K562 (cell line): ENCODE measurements at regions of chr18 and their contacts with region 1.

Region 1: DNA sequence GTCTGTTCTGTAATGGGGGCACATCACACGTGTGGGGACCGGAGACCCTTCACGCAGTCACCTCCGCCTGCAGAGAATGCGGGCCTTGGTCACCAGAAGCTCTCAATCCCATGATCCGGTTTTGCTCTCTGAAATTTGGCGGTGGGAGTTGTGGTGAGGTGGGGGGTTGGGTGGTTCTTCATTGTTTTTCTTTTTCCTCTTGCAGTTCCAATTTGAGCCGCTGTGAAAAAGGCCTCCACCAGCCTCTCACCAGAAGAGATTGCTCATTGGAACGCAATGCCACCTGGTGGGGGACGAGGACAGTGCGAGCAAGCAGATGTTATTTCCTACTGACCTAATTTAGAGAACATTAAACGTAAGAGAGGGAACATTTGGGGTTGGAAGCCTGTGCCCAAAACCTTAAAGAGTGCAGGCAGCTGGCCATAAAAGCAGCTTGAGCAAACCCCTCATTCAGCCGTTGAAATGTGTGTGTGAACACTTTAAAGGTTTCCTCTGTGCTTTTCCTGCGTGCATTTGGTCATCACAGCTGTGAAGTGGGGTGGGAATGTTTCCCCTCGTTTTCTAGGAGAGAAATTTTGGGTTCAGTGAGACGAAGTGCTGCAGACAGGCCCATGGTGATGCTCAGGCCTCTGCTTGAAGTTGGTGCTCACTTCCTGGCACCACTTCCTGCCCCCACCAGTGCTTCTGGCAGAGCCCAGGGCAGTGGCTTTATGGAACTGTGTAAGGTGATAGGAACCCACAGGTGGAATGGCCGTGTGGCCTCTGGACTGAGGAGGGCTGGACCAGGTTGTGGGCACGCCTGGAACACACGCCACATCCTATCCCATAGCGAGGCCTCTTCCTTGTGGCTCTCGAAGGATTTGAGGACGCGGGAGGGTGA is 61.7 kb downstream of the ZCCHC2 start:
- DNase-seq: peak; percentile 77 to 86 (median 79)
- ATAC-seq: peak; percentile 92
- H3K4me3 ChIP-seq: no peak overlapping the region
- H3K27ac ChIP-seq: no peak overlapping the region
- H3K4me1 ChIP-seq: peaks cover 2 to 3% of the 10 kb centered on the region in 2 experiments; a peak in 1 of 5 replicates
- H3K27me3 ChIP-seq: no peaks in the 10 kb centered on the region
- CTCF ChIP-seq: peak; percentile 91 to 99 (median 99)
- EP300 ChIP-seq: no peak
- POLR2A ChIP-seq: no peak
- RAD21 ChIP-seq: peak; percentile 83 to 91

Region 2: DNA sequence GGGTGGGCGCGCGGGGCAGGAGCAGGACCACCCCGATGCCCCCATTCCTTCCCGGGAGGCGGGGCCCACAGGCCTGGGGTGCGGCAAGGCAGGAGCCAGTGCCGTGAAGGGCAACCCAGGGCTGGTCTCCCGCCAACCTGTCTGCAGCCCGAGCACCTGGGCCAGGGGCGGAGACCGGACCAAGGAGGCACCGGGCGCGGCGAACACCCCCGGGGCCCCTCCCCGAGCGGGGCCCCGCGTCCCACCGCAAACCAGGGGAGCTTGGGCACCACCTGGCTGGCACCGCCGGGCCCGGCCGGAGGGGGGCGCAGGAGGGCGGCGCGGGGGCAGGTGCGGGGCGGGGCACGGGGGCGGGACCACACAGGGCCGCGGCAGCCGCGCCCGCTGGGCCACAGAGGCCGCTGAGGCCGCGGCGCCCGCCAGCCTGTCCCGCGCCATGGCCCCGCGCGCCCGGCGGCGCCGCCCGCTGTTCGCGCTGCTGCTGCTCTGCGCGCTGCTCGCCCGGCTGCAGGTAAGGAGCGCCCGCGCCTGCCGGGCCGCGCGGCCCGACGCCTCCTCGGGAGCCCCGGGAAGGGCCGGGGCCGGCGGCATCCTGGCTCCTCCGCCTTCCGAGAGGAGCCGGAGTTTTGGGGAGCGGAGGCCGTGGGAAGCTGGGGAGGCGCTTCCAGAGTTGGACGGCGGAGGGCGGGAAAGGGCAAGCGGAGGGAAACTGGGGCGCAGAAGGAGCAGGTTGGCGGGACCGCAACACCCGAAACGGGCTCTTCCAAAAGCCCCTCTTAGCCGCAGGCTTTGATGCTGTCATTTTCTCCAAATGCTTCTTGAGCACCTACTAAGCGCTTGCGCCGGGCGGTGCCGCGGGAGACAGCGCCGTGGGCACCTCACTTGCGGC is 259.3 kb before region 1 on chr18 and contains the start of gene TNFRSF11A:
- CTCF ChIA-PET with region 1: interaction called, 5 read pairs
- POLR2A ChIA-PET with region 1: no interaction called
- in situ Hi-C with region 1: no loop called
- intact Hi-C with region 1: loop called (anchors 1 kb)
- DNase-seq: peak; percentile 46 to 83 (median 80)
- ATAC-seq: peak; percentile 95
- H3K4me3 ChIP-seq: peak within 1 kb of the TSS; percentile 37
- H3K27ac ChIP-seq: no peak within 1 kb of the TSS
- H3K4me1 ChIP-seq: peaks cover 4 to 20% of the 10 kb centered on the region in 2 experiments; a peak in 3 of 5 replicates
- H3K27me3 ChIP-seq: peaks cover 20 to 30% of the 10 kb centered on the region in 2 experiments
- CTCF ChIP-seq: peak in 2 of 3 experiments; percentile 25 to 48; a peak in 2 of 6 replicates
- EP300 ChIP-seq: no peak
- POLR2A ChIP-seq: no peak
- RAD21 ChIP-seq: no peak
- polyA plus RNA-seq, gene TNFRSF11A: not detected

Region 3: DNA sequence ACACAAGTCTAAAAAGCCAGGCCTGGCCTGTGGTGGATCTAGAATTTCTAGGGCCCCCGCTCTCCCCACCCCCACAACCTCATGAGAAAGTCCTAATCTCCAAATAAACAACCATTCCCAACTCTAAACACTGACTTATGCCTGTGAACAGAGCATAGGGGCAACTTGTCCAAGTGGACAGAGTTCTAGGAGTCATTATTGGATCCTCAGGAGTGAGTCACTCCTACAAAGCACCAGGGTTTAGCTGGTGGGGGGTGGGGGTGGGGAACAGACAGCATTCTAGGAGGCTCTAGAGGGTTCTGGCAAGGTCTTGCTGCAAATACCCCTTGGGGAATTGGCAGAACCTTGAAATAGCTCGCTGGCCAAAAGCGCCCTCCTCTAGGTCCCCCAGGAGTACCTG is 21.6 kb after region 1 on chr18:
- CTCF ChIA-PET with region 1: no interaction called
- POLR2A ChIA-PET with region 1: no interaction called
- in situ Hi-C with region 1: no loop called
- intact Hi-C with region 1: no loop called
- DNase-seq: peak in 2 of 4 experiments; percentile 23 to 29
- ATAC-seq: no peak
- H3K4me3 ChIP-seq: no peak overlapping the region
- H3K27ac ChIP-seq: no peak overlapping the region
- H3K4me1 ChIP-seq: peaks cover 6 to 7% of the 10 kb centered on the region in 2 experiments; a peak in 4 of 5 replicates
- H3K27me3 ChIP-seq: peaks cover 0 to 15% of the 10 kb centered on the region in 2 experiments; a peak in 2 of 5 replicates
- CTCF ChIP-seq: no peak
- EP300 ChIP-seq: no peak
- POLR2A ChIP-seq: no peak
- RAD21 ChIP-seq: no peak

Region 4: DNA sequence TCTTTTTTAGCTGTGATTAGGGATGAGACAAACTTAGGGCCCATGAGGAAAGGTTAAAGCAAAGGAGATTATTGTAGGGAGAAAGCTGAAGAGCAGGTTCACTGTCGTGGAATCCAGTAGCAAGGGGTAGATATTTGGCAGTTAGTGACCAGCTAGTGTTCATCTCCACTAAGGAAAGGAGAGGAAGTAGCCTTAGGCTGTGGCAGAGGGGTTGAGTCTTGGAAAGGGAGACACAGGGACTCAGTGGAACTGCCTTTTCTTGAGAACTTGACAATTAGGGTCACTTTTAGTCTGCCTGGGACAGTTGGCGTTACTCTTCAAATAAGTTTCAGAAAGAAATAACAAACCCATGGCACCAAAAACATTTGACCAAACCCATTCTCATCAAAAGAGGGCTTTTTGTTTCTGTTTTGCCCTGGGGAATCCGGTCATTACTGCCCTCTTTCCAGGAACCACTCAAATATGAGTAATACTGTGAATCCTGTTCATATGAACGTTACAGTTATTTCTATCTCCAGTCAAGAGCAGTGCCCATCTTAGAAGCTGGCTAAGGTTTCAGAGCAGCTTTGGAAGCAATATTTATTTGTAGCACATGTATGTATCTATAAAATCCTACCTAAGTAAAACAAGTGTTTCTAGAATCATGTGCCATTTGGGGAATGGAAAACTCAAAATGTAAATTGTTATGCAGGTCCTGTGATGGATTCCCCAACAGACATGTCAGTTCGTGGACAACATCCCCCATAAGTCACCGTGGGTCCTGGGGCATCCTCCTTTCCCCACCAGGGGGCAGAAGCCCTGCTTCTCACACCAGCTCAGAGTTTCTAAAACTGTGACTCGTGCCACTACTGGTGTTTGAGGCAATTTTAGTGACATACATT is 53.6 kb after region 1 on chr18:
- CTCF ChIA-PET with region 1: no interaction called
- POLR2A ChIA-PET with region 1: no interaction called
- in situ Hi-C with region 1: no loop called
- intact Hi-C with region 1: loop called (anchors 5 kb)
- DNase-seq: peak; percentile 69 to 71 (median 70)
- ATAC-seq: peak; percentile 95
- H3K4me3 ChIP-seq: no peak overlapping the region
- H3K27ac ChIP-seq: no peak overlapping the region
- H3K4me1 ChIP-seq: peaks cover 0 to 6% of the 10 kb centered on the region in 2 experiments; a peak in 3 of 5 replicates
- H3K27me3 ChIP-seq: no peaks in the 10 kb centered on the region
- CTCF ChIP-seq: peak; percentile 72 to 87 (median 78)
- EP300 ChIP-seq: no peak
- POLR2A ChIP-seq: no peak
- RAD21 ChIP-seq: peak; percentile 62 to 79

Region 5: GRCh38 chr18:62957885-62958472 is 373.5 kb after region 1 on chr18:
- CTCF ChIA-PET with region 1: interaction called, 6 read pairs
- POLR2A ChIA-PET with region 1: no interaction called
- in situ Hi-C with region 1: no loop called
- intact Hi-C with region 1: loop called (anchors 1 kb)
- DNase-seq: peak in 1 of 4 experiments; percentile 55
- ATAC-seq: peak; percentile 93
- H3K4me3 ChIP-seq: no peak overlapping the region
- H3K27ac ChIP-seq: no peak overlapping the region
- H3K4me1 ChIP-seq: 0 out of 5 replicates have a peak, but pooled peaks cover 0 to 4% of the 10 kb centered on the region in 2 experiments
- H3K27me3 ChIP-seq: no peaks in the 10 kb centered on the region
- CTCF ChIP-seq: peak; percentile 42 to 51 (median 49)
- EP300 ChIP-seq: no peak
- POLR2A ChIP-seq: no peak
- RAD21 ChIP-seq: peak; percentile 49 to 70